ENCODE measurements at regions of chr13 and their contacts with region 1.

Region 1: GRCh38 chr13:42271337-42272114 is 426 bp upstream of the AKAP11 start:
- DNase-seq: peak; percentile 88 to 98
- H3K4me3 ChIP-seq: peak overlapping the region; percentile 82 to 91
- H3K27ac ChIP-seq: peak overlapping the region; percentile 86 to 94
- H3K4me1 ChIP-seq: peaks cover 3 to 5% of the 10 kb centered on the region in 2 donors
- H3K27me3 ChIP-seq: no peaks in the 10 kb centered on the region
- CTCF ChIP-seq: no peak

Region 2: GRCh38 chr13:41310963-41311606 is 960.4 kb before region 1 on chr13 and contains the start of gene NAA16:
- intact Hi-C with region 1: loop called (anchors 5 kb)
- DNase-seq: peak; percentile 53 to 95
- H3K4me3 ChIP-seq: peak within 1 kb of the TSS; percentile 92 to 94
- H3K27ac ChIP-seq: peak within 1 kb of the TSS; percentile 93 to 96
- H3K4me1 ChIP-seq: peaks cover 0 to 12% of the 10 kb centered on the region in 2 donors
- H3K27me3 ChIP-seq: no peaks in the 10 kb centered on the region
- CTCF ChIP-seq: peak; percentile 2 to 8 (median 4)
- total RNA-seq, gene NAA16: 11.9 TPM

Measured in ascending aorta (tissue), 2 donors.